Activated T-helper 1 cell treated with anti-CD3 and anti-CD28 coated beads, Interleukin-12 subunit alpha, Interleukin-12 subunit beta, Interleukin-2, Interleukin-4 antibody, amounts not matched to agents 30 ng/mL and 10 ng/mL and 1 ng/mL, durations not matched to agents 14 hours and 24 hours and 36 hours (primary cell): ENCODE measurements at regions of chr10 and their contacts with region 1.

Region 1: GRCh38 chr10:80382989-80383388 is 25.4 kb upstream of the PRXL2A start:
- DNase-seq: peak; percentile 31
- H3K4me3 Mint-ChIP-seq: no peak overlapping the region
- H3K27ac Mint-ChIP-seq: no peak overlapping the region
- H3K4me1 Mint-ChIP-seq: peaks cover 14% of the 10 kb centered on the region
- H3K27me3 Mint-ChIP-seq: no peaks in the 10 kb centered on the region

Region 2: DNA sequence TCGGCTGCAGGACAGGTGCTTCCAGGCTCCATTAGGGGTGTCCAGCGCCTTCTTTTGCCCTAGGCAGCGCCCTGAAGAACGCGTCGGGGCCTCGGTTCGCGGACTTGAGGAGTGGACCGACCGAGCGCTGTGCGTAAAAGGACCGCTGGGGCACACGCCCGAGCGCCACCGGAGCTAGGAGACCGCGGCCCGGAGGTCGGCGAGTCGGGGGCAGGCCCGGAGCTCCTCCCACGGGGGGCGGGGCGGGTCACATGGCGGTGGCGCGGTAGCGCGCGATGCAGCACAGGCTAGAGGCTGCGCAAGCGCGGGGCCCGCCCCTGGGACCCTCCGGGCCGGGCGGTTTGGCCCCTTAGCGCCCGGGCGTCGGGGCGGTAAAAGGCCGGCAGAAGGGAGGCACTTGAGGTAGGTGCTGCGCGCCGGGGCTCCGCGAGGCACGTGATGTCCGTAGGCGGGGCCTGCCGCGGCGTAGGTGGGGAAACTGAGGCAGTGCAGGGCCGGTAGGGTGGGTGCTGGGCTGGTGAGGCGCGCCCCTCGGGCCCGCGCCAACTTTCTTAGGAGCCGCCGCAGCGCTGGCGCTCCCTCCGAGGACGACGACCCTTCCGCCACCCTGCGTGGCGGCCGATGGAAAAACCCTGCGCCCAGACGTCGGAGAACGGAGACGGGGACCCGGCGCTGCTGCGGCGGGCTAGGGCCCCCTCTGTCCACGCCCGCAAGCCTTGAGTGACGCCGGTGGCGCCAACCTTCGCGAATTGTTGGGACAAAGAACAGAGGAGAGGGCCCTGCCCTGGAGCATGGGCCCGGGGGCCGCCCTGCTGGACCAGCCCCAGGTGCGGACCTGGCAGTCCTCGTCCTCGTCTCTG is 25.5 kb after region 1 on chr10 and contains the start of gene PRXL2A:
- intact Hi-C with region 1: loop called (anchors 2 kb)
- DNase-seq: peak; percentile 81
- H3K4me3 Mint-ChIP-seq: peak within 1 kb of the TSS; percentile 89
- H3K27ac Mint-ChIP-seq: peak within 1 kb of the TSS; percentile 93
- H3K4me1 Mint-ChIP-seq: peaks cover 28% of the 10 kb centered on the region
- H3K27me3 Mint-ChIP-seq: peaks cover 20% of the 10 kb centered on the region
- total RNA-seq, gene PRXL2A: 11.9 and 13.2 TPM in 2 replicates

Region 3: GRCh38 chr10:80504158-80504811 is 121.3 kb after region 1 on chr10:
- intact Hi-C with region 1: loop called (anchors 1 kb)
- DNase-seq: no peak
- H3K4me3 Mint-ChIP-seq: no peak overlapping the region
- H3K27ac Mint-ChIP-seq: peak overlapping the region; percentile 86
- H3K4me1 Mint-ChIP-seq: peaks cover 67% of the 10 kb centered on the region
- H3K27me3 Mint-ChIP-seq: no peaks in the 10 kb centered on the region

Region 4: GRCh38 chr10:80530251-80530650 is 147.3 kb after region 1 on chr10:
- intact Hi-C with region 1: loop called (anchors 2 kb)
- DNase-seq: peak; percentile 29
- H3K4me3 Mint-ChIP-seq: peak overlapping the region; percentile 72
- H3K27ac Mint-ChIP-seq: peak overlapping the region; percentile 92
- H3K4me1 Mint-ChIP-seq: peaks cover 73% of the 10 kb centered on the region
- H3K27me3 Mint-ChIP-seq: no peaks in the 10 kb centered on the region

Region 5: GRCh38 chr10:80599424-80599847 is 216.4 kb after region 1 on chr10:
- intact Hi-C with region 1: loop called (anchors 5 kb)
- DNase-seq: no peak
- H3K4me3 Mint-ChIP-seq: no peak overlapping the region
- H3K27ac Mint-ChIP-seq: no peak overlapping the region
- H3K4me1 Mint-ChIP-seq: no peaks in the 10 kb centered on the region
- H3K27me3 Mint-ChIP-seq: peaks cover 3% of the 10 kb centered on the region

Region 6: DNA sequence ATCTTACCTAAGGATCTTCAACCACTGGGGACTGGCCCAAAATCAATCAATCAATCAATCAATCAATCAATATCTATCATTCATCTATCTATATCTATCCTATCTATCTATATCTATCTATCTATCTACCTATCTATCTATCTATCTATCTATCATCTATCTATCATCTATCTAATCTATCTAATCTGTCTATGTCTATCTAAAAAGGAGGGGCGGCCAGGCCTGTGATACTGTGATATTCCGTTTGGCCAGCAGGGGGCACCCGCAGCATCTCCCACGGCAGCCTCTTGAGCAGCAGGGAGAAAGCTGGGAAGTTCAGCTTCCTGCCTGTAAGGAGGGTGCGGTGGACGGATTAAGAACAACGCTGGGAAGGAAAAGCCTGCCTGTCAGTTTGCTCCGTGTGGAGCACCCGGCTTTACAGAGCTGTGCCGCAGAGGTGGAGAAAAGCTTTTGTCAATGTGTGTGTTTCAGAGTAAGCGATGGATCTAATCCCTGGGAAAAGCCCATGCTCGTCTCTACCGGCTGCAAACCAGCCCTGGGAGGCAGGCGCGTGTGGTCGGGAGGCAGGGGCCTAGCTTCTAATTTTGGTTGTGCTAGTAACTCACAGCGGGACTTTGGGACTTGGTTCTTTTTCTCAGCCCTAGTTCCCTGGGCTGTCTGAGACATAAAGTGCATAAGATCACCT is 279.7 kb after region 1 on chr10:
- intact Hi-C with region 1: loop called (anchors 1 kb)
- DNase-seq: peak; percentile 26
- H3K4me3 Mint-ChIP-seq: no peak overlapping the region
- H3K27ac Mint-ChIP-seq: no peak overlapping the region
- H3K4me1 Mint-ChIP-seq: peaks cover 6% of the 10 kb centered on the region
- H3K27me3 Mint-ChIP-seq: peaks cover 7% of the 10 kb centered on the region

Region 7: GRCh38 chr10:80924063-80924952 is 541.3 kb after region 1 on chr10:
- intact Hi-C with region 1: loop called (anchors 1 kb)
- DNase-seq: no peak
- H3K4me3 Mint-ChIP-seq: no peak overlapping the region
- H3K27ac Mint-ChIP-seq: no peak overlapping the region
- H3K4me1 Mint-ChIP-seq: no peaks in the 10 kb centered on the region
- H3K27me3 Mint-ChIP-seq: peaks cover 8% of the 10 kb centered on the region